CD4-positive, alpha-beta memory T cell (primary cell): ENCODE measurements at regions of chr1 and their contacts with region 1.

Region 1: DNA sequence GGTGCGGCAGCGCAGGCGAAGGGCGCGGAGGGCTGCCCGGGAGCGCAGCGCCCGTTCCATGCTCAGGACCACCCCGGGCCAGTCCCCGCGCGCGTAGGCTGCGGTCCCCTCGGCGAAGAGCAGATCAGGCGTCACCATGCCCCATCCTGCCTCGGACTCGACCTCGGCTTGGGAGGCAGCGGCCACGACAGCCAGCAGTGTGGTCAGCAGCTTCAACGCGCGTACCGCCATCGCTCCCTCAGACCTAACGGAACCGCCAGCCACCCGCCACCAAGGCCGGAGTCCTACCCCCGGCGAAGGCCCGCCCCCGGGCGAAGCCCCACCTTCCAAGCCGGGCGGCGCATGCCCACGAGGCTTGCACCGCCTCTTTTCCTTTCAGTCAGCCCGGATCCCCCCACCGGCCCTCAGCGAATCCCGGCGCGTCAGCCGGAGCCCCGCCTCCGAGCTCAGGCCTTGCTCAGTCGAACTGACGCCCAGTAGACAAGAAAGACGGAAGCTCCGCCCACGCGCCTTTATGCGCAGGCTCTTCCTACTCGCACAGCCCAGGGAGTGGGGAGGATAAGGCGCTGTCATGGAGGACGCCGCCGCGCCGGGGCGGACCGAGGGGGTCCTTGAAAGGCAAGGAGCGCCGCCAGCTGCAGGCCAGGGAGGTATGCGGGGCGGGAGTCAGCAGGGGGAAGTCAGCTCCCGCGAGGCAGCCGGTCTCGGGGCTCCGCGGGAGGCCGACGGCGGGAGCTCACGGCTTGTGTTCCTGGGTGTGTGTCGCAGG is at the starts of genes C1orf50 and P3H1:
- DNase-seq: peak; percentile 100
- H3K4me3 ChIP-seq: peak within 1 kb of the TSS; percentile 67 to 98
- H3K4me3 Mint-ChIP-seq: peak within 1 kb of the TSS in 1 of 8 donors; percentile 94
- H3K27ac ChIP-seq: peak within 1 kb of the TSS; percentile 85
- H3K27ac Mint-ChIP-seq: peak within 1 kb of the TSS; percentile 85 to 98 (median 93)
- H3K4me1 ChIP-seq: peaks cover 56% of the 10 kb centered on the region
- H3K4me1 Mint-ChIP-seq: peaks cover 18 to 45% (median 28%) of the 10 kb centered on the region in 4 donors
- H3K27me3 ChIP-seq: no peaks in the 10 kb centered on the region
- H3K27me3 Mint-ChIP-seq: no peaks in the 10 kb centered on the region
- total RNA-seq, gene C1orf50: 20.6 to 20.9 TPM
- total RNA-seq, gene P3H1: 52.5 to 56.6 TPM

Region 2: DNA sequence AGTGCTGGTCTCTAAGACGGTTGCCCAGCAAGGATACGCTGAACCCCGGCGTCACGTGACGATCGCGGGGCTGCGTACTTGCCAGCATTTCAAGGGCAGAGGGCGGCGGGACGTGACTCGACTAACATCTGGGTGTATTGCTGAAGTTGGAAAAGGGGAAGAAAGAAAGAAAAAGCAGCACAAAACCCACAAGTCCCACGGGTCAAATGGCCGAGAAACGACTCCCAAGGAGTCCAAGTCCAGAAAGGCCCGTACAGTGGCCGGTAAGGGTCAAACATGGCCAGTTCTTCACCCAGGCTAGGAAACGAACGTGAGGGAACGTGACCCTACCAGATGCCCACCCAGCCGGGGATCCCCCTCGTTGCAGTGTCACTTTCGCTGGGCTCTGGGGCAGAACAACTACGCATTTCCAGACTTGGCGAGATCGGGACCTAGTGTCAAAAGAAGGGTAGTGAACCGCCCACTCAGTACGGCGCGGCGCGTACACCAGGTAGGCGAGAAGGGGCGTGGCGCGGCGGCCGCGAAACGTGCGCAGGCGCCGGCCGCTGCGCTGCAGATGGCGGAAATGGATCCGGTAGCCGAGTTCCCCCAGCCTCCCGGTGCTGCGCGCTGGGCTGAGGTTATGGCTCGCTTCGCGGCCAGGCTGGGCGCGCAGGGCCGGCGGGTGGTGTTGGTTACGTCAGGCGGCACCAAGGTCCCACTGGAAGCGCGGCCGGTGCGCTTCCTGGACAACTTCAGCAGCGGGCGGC is 310.7 kb before region 1 on chr1 and contains the starts of genes PPCS and ZMYND12:
- CTCF ChIA-PET with region 1: no interaction called
- POLR2A ChIA-PET with region 1: interaction called, 15 read pairs
- intact Hi-C with region 1: no loop called
- DNase-seq: peak; percentile 91 to 96 (median 93)
- H3K4me3 ChIP-seq: peak within 1 kb of the TSS; percentile 84 to 96
- H3K4me3 Mint-ChIP-seq: peak within 1 kb of the TSS; percentile 91 to 100 (median 99)
- H3K27ac ChIP-seq: peak within 1 kb of the TSS; percentile 99
- H3K27ac Mint-ChIP-seq: peak within 1 kb of the TSS; percentile 92 to 100 (median 99)
- H3K4me1 ChIP-seq: peaks cover 29% of the 10 kb centered on the region
- H3K4me1 Mint-ChIP-seq: peaks cover 21 to 43% (median 33%) of the 10 kb centered on the region in 4 donors
- H3K27me3 ChIP-seq: no peaks in the 10 kb centered on the region
- H3K27me3 Mint-ChIP-seq: no peaks in the 10 kb centered on the region
- total RNA-seq, gene PPCS: 61.1 to 65.2 TPM
- total RNA-seq, gene ZMYND12: 0.58 to 1.3 TPM

Region 3: DNA sequence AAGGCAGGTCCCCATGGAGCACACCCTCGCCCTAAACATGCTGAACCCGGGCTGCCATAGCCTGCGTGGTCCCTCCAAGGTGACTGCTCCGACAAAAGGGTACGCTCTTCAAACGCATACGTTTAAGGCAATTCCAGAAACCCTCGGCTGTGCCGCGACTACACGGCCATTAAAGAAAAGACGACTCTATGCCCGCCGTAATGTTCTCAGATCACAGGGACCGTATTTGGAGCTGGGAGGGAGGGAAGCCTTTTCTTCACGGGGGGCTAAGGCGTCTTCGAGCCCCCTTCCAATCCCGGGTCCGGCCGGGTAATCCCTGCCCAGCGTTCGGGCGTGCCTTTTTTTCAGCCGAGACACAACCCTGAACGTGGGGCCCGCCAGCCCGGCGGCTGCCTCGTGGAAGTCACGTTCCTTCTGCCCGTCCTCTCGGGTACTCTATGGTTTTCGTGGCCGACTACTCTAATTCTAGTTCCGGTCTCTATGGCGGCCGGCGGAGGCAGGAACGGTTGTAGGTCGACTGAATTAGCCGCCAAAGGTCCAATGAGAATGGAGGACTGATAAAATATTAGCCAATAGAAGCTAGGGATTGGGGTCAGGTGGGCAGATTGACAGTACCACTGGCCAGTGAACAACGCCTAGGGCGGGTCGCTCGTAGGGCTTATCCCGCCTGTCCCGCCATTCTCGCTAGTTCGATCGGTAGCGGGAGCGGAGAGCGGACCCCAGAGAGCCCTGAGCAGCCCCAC is 85.0 kb before region 1 on chr1 and contains the start of gene YBX1:
- CTCF ChIA-PET with region 1: no interaction called
- POLR2A ChIA-PET with region 1: interaction called, 72 read pairs
- intact Hi-C with region 1: loop called (anchors 1 kb)
- DNase-seq: peak; percentile 97 to 98 (median 97)
- H3K4me3 ChIP-seq: peak within 1 kb of the TSS; percentile 77 to 90
- H3K4me3 Mint-ChIP-seq: peak within 1 kb of the TSS; percentile 96 to 100 (median 98)
- H3K27ac ChIP-seq: peak within 1 kb of the TSS; percentile 78
- H3K27ac Mint-ChIP-seq: peak within 1 kb of the TSS; percentile 96 to 99 (median 99)
- H3K4me1 ChIP-seq: peaks cover 49% of the 10 kb centered on the region
- H3K4me1 Mint-ChIP-seq: peaks cover 43 to 61% (median 52%) of the 10 kb centered on the region in 4 donors
- H3K27me3 ChIP-seq: no peaks in the 10 kb centered on the region
- H3K27me3 Mint-ChIP-seq: no peaks in the 10 kb centered on the region
- total RNA-seq, gene YBX1: 328 TPM

Region 4: DNA sequence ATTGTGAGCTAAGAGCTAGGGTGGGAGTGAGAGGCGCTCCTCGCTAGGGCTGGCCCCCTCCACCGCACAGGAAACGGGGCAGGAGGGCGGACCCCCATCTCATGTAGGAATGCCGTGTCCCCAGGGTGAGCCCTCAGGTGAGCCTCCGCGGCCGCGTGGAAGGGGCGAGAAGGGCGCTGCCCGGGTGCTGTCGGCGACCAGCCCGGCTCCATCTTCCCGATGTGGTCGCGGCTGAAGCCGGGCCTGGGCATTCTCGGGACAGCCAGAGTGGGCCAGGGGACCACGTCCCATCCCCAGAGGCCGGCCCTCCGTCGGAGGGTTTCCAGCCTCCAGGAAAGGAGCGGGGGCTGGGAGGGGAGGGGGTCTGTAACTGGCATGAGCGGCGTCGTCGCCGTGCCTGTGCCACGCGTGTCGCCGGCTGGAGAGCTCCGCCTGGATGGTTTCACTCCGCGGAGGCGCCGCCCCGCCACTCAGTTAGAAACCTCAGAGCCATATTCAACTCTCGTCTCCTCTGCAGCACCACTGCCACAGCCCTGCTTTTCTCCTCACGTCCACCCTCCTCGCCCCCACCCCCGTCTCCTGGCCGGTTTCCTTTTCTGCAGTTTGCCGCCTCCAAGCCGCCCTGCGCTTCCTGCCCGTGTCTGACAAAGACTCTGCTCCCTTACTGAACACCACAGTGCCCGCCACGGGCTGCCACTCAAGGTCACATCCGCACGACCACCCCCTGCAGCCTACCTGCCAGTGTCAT is 18.2 kb after region 1 on chr1 and contains the start of gene TMEM269:
- CTCF ChIA-PET with region 1: interaction called, 21 read pairs
- POLR2A ChIA-PET with region 1: interaction called, 16 read pairs
- intact Hi-C with region 1: no loop called
- DNase-seq: peak; percentile 35 to 66 (median 40)
- H3K4me3 ChIP-seq: peak within 1 kb of the TSS; percentile 6 to 51
- H3K4me3 Mint-ChIP-seq: peak within 1 kb of the TSS; percentile 85 to 94 (median 88)
- H3K27ac ChIP-seq: peak within 1 kb of the TSS; percentile 8
- H3K27ac Mint-ChIP-seq: peak within 1 kb of the TSS; percentile 43 to 90 (median 87)
- H3K4me1 ChIP-seq: peaks cover 14% of the 10 kb centered on the region
- H3K4me1 Mint-ChIP-seq: peaks cover 8 to 23% (median 13%) of the 10 kb centered on the region in 4 donors
- H3K27me3 ChIP-seq: no peaks in the 10 kb centered on the region
- H3K27me3 Mint-ChIP-seq: no peaks in the 10 kb centered on the region
- total RNA-seq, gene TMEM269: 0.35 to 0.36 TPM

Region 5: GRCh38 chr1:42877380-42877779 is 110.5 kb after region 1 on chr1:
- CTCF ChIA-PET with region 1: no interaction called
- POLR2A ChIA-PET with region 1: no interaction called
- intact Hi-C with region 1: no loop called
- DNase-seq: no peak
- H3K4me3 ChIP-seq: no peak overlapping the region
- H3K4me3 Mint-ChIP-seq: no peak overlapping the region
- H3K27ac ChIP-seq: no peak overlapping the region
- H3K27ac Mint-ChIP-seq: no peak overlapping the region
- H3K4me1 ChIP-seq: no peaks in the 10 kb centered on the region
- H3K4me1 Mint-ChIP-seq: no peaks in the 10 kb centered on the region
- H3K27me3 ChIP-seq: no peaks in the 10 kb centered on the region
- H3K27me3 Mint-ChIP-seq: peaks cover 5 to 10% of the 10 kb centered on the region in 2 donors

Region 6: GRCh38 chr1:42913426-42914091 is 146.6 kb after region 1 on chr1:
- CTCF ChIA-PET with region 1: interaction called, 18 read pairs
- POLR2A ChIA-PET with region 1: interaction called, 3 read pairs
- intact Hi-C with region 1: no loop called
- DNase-seq: peak; percentile 70 to 84 (median 78)
- H3K4me3 ChIP-seq: no peak overlapping the region
- H3K4me3 Mint-ChIP-seq: no peak overlapping the region
- H3K27ac ChIP-seq: no peak overlapping the region
- H3K27ac Mint-ChIP-seq: no peak overlapping the region
- H3K4me1 ChIP-seq: no peaks in the 10 kb centered on the region
- H3K4me1 Mint-ChIP-seq: peaks cover 0 to 5% (median 2%) of the 10 kb centered on the region in 4 donors
- H3K27me3 ChIP-seq: no peaks in the 10 kb centered on the region
- H3K27me3 Mint-ChIP-seq: peaks cover 2 to 4% of the 10 kb centered on the region in 2 donors

Region 7: GRCh38 chr1:43008115-43009060 is 241.5 kb after region 1 on chr1:
- CTCF ChIA-PET with region 1: no interaction called
- POLR2A ChIA-PET with region 1: no interaction called
- intact Hi-C with region 1: no loop called
- DNase-seq: no peak
- H3K4me3 ChIP-seq: no peak overlapping the region
- H3K4me3 Mint-ChIP-seq: no peak overlapping the region
- H3K27ac ChIP-seq: no peak overlapping the region
- H3K27ac Mint-ChIP-seq: no peak overlapping the region
- H3K4me1 ChIP-seq: peaks cover 4% of the 10 kb centered on the region
- H3K4me1 Mint-ChIP-seq: peaks cover 0 to 2% (median 0%) of the 10 kb centered on the region in 4 donors
- H3K27me3 ChIP-seq: no peaks in the 10 kb centered on the region
- H3K27me3 Mint-ChIP-seq: peaks cover 9 to 12% of the 10 kb centered on the region in 2 donors

Region 8: DNA sequence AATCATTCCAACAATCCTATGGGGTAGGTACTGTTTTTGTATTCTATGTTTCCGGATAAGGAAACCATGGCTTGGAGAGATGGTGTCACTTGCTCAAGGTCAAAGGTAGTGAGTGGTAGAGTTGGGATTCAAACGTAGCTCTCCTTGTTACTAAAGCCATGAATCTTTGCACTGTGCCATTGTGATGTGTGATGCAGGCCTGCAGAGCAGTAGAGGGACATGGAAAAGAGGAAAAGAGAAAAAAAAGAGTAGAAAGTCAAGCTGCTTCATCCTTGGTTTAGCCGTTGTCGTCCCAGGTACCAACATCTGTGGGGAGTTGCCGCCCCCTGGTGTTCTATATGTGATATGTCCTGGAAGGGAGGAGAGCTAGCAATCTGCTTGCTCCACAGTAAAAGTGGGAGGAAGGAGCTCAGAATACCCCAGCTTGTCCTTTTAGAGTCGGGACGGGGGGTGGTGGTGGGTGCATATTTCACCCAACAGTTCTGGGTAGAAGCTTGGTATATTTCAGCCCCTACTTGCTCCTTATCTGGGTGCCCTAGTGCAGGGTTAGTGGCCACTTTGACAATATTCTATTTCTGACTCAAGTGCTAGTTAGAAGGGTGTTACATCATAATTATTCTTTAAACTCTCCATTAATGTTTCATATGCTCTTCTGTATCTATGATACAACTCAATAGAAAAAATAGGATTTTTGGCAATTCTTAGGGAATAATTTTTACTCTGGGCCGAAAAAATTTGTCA is 306.7 kb after region 1 on chr1:
- CTCF ChIA-PET with region 1: interaction called, 13 read pairs
- POLR2A ChIA-PET with region 1: interaction called, 14 read pairs
- intact Hi-C with region 1: no loop called
- DNase-seq: peak; percentile 66 to 76 (median 72)
- H3K4me3 ChIP-seq: no peak overlapping the region
- H3K4me3 Mint-ChIP-seq: no peak overlapping the region
- H3K27ac ChIP-seq: no peak overlapping the region
- H3K27ac Mint-ChIP-seq: peak overlapping the region in 3 of 7 donors; percentile 35 to 72 (median 70)
- H3K4me1 ChIP-seq: peaks cover 4% of the 10 kb centered on the region
- H3K4me1 Mint-ChIP-seq: peaks cover 2 to 9% (median 4%) of the 10 kb centered on the region in 4 donors
- H3K27me3 ChIP-seq: no peaks in the 10 kb centered on the region
- H3K27me3 Mint-ChIP-seq: no peaks in the 10 kb centered on the region